ENCODE measurements at regions of chr6 and their contacts with region 1.

Region 1: GRCh38 chr6:36865835-36866234 is 8.8 kb downstream of the PPIL1 start:
- DNase-seq: no peak
- ATAC-seq: peak; percentile 41
- H3K4me3 Mint-ChIP-seq: no peak overlapping the region
- H3K27ac Mint-ChIP-seq: peak overlapping the region; percentile 38
- H3K4me1 Mint-ChIP-seq: peaks cover 50% of the 10 kb centered on the region
- H3K27me3 Mint-ChIP-seq: no peaks in the 10 kb centered on the region

Region 2: GRCh38 chr6:36116066-36116864 is 749.6 kb before region 1 on chr6:
- CTCF ChIA-PET with region 1: no interaction called
- POLR2A ChIA-PET with region 1: interaction called, 20 read pairs
- intact Hi-C with region 1: no loop called
- DNase-seq: no peak
- ATAC-seq: no peak
- H3K4me3 Mint-ChIP-seq: no peak overlapping the region
- H3K27ac Mint-ChIP-seq: peak overlapping the region; percentile 51
- H3K4me1 Mint-ChIP-seq: peaks cover 79% of the 10 kb centered on the region
- H3K27me3 Mint-ChIP-seq: no peaks in the 10 kb centered on the region

Region 3: DNA sequence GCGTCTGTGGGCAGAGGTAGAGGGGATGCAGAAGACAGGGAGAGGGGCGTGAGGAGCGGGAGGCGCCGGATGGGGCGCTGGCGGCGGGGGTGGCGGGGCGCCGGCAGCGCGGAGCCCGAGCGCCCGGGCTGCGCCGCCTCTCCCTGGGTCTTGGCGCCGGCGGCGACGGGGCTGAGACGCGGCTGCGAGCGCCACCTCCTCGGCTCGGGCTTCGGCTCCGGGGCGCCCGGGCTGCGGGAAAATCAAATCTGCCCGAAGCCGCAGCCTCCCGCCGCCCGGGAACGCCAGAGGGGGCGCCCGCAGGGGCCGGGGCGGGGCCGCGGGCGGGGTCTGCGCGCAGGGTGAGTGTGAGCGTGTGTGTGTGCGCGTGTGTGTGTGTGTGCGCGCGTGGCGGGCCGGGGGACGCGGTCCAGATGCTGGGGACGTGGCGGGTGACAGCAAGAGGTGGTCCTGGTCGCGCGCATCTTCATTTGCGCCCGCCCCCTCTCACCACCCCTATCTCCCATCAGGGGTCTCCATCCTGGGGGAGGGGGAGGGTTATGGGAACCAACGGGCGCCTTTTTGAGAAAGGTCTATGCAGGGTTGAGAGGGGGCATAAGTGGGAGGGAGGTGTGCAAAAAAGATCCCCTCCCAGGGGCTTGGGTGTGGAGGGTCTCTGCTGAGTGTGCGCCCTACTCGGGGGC is 25.9 kb before region 1 on chr6:
- CTCF ChIA-PET with region 1: no interaction called
- POLR2A ChIA-PET with region 1: no interaction called
- intact Hi-C with region 1: loop called in 1 of 2 experiments (anchors 2 kb)
- DNase-seq: peak; percentile 65
- ATAC-seq: peak; percentile 72
- H3K4me3 Mint-ChIP-seq: peak overlapping the region; percentile 62
- H3K27ac Mint-ChIP-seq: peak overlapping the region; percentile 48
- H3K4me1 Mint-ChIP-seq: peaks cover 10% of the 10 kb centered on the region
- H3K27me3 Mint-ChIP-seq: peaks cover 24% of the 10 kb centered on the region

Measured in activated CD4-positive, alpha-beta T cell treated with anti-CD3 and anti-CD28 coated beads for 36 hours (primary cell).